Heart left ventricle (tissue), 16 donors: ENCODE measurements at regions of chr4 and their contacts with region 1.

Region 1: GRCh38 chr4:154506253-154506652 is 14.7 kb upstream of the DCHS2 start:
- DNase-seq: no peak
- ATAC-seq: no peak
- H3K4me3 ChIP-seq: no peak overlapping the region
- H3K27ac ChIP-seq: no peak overlapping the region
- H3K4me1 ChIP-seq: no peaks in the 10 kb centered on the region
- H3K27me3 ChIP-seq: peaks cover 0 to 20% (median 3%) of the 10 kb centered on the region in 9 donors
- CTCF ChIP-seq: peak in 11 of 12 donors; percentile 14 to 55 (median 39)
- POLR2A ChIP-seq: no peak

Region 2: GRCh38 chr4:153785910-153786721 is 720.1 kb before region 1 on chr4:
- intact Hi-C with region 1: loop called in 3 of 10 experiments (anchors 10 kb)
- DNase-seq: no peak
- ATAC-seq: no peak
- H3K4me3 ChIP-seq: no peak overlapping the region
- H3K27ac ChIP-seq: no peak overlapping the region
- H3K4me1 ChIP-seq: peaks cover 0 to 19% (median 14%) of the 10 kb centered on the region in 12 donors
- H3K27me3 ChIP-seq: peaks cover 26 to 86% (median 43%) of the 10 kb centered on the region in 9 donors
- CTCF ChIP-seq: peak in 7 of 12 donors; percentile 19 to 47 (median 34)
- POLR2A ChIP-seq: no peak

Region 3: DNA sequence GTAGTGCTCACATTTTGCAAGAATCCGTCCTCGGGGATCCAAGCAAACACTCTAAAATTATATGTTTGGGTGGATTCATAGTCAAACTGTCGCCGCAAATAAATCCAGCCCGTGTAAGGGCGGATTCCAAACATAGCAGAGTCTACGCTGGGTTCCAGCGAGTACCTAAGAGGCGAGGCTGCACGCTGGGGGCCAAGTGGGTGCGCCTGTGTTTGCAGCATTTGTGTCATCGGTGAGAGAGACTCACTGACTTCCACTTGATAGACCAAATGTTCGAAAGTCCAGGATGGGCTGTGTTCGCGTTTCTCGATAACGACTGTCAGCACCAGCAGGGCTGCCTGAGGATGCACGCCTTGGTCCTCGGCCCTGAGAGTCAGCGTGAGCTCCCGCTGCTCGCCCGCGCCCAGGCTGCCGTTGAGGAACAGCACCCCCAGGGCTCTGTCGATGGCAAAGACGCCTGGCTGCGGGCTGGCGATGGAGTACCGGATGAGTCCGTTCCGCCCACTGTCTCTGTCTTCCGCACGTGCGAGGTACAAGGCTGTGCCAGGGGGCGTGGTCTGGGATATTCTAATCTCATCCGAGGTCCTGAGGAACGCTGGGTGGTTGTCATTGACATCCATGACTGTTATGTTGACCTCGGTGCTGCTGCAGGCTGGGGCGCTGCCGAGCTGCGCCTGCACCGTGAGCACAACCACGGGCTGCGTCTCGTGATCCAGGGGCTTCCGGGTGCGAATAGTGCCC is 173.4 kb before region 1 on chr4:
- intact Hi-C with region 1: loop called in 2 of 10 experiments (anchors 10 kb)
- DNase-seq: peak in 3 of 5 donors; percentile 6 to 57 (median 31)
- ATAC-seq: peak in 3 of 4 donors; percentile 58 to 61 (median 59)
- H3K4me3 ChIP-seq: peak overlapping the region in 8 of 12 donors; percentile 7 to 42 (median 21)
- H3K27ac ChIP-seq: no peak overlapping the region
- H3K4me1 ChIP-seq: peaks cover 0 to 11% (median 0%) of the 10 kb centered on the region in 12 donors
- H3K27me3 ChIP-seq: peaks cover 0 to 46% (median 13%) of the 10 kb centered on the region in 9 donors
- CTCF ChIP-seq: no peak
- POLR2A ChIP-seq: no peak

Region 4: DNA sequence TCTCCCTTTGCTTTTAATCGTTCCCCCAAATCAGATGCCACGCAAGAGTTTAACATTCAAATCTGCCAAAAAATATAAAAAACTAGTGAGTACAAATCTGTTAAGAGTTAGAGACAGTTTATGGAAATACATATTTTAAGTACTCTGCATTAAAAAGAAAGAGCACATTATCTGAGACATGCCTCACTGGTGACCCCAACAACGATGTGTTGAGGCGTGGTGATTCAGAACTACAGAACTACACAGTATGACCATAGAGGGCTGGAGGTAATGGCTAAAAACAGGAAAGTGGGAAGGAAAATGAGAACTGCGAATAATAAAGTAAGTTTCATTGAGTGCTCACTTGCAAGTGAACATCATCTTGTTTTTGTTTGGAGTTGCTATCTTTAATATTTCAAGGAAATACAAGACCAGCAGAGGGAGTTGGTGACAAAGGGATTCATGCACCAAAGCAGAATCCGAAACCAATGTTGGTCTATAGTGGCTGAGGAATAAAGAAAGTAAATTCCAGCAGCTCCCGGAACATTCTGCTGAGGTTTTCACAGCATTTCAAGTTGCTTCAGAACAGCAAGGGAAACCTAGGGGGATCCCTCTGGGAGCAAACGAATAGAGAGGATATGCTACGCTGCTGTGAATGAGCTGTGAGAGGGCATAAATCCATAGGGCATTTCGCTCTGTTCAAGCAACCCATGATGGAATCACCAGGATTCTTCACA is 106.8 kb before region 1 on chr4:
- intact Hi-C with region 1: loop called (anchors 5 to 10 kb)
- DNase-seq: no peak
- ATAC-seq: peak in 1 of 4 donors; percentile 52
- H3K4me3 ChIP-seq: peak overlapping the region in 4 of 12 donors; percentile 26 to 39 (median 30)
- H3K27ac ChIP-seq: peak overlapping the region in 1 of 12 donors; percentile 41
- H3K4me1 ChIP-seq: no peaks in the 10 kb centered on the region
- H3K27me3 ChIP-seq: peaks cover 0 to 4% (median 0%) of the 10 kb centered on the region in 9 donors
- CTCF ChIP-seq: peak in 8 of 12 donors; percentile 11 to 47 (median 39)
- POLR2A ChIP-seq: no peak

Region 5: GRCh38 chr4:154416190-154416547 is 90.1 kb before region 1 on chr4:
- intact Hi-C with region 1: no loop called
- DNase-seq: peak; percentile 19 to 51 (median 37)
- ATAC-seq: peak; percentile 21 to 64 (median 58)
- H3K4me3 ChIP-seq: peak overlapping the region; percentile 17 to 62 (median 50)
- H3K27ac ChIP-seq: peak overlapping the region in 8 of 12 donors; percentile 2 to 83 (median 54)
- H3K4me1 ChIP-seq: peaks cover 0 to 15% (median 0%) of the 10 kb centered on the region in 12 donors
- H3K27me3 ChIP-seq: peaks cover 0 to 4% (median 0%) of the 10 kb centered on the region in 9 donors
- CTCF ChIP-seq: peak in 1 of 12 donors; percentile 11
- POLR2A ChIP-seq: no peak

Region 6: GRCh38 chr4:154618708-154619315 is 112.6 kb after region 1 on chr4:
- intact Hi-C with region 1: loop called in 1 of 10 experiments (anchors 5 kb)
- DNase-seq: peak in 1 of 5 donors; percentile 29
- ATAC-seq: no peak
- H3K4me3 ChIP-seq: no peak overlapping the region
- H3K27ac ChIP-seq: no peak overlapping the region
- H3K4me1 ChIP-seq: peaks cover 0 to 9% (median 0%) of the 10 kb centered on the region in 12 donors
- H3K27me3 ChIP-seq: no peaks in the 10 kb centered on the region
- CTCF ChIP-seq: peak; percentile 20 to 61 (median 45)
- POLR2A ChIP-seq: no peak